ENCODE measurements at regions of chr1 and their contacts with region 1.

Region 1: DNA sequence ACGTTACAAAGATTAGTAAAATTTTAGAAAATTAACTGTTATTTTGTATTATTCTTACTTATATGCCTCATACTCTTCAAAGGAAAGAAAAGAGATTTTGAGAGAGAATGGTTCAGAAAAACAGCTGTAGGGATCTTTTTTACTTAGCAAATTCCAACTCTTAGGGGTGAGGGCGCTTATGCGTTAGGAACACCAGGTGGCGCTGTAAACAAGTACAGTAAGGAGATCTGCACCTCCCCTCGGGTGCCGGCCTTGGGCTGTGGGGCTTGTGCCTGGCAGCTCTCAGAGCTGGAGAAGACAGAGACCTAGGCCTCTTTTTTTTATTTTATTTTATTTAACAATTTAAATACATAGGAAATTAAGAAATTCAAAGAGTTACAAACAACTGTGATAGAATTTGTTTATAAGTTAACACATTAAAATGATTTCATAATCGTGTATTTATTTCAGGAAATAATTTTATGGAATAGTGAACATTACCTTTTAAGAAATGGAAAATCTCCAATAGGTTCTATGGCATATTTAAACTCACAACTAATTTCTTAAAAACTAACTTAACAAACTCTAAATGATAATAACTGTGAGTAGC is 32.6 kb downstream of the UTP25 start:
- DNase-seq: peak; percentile 75 to 94 (median 88)

Region 2: DNA sequence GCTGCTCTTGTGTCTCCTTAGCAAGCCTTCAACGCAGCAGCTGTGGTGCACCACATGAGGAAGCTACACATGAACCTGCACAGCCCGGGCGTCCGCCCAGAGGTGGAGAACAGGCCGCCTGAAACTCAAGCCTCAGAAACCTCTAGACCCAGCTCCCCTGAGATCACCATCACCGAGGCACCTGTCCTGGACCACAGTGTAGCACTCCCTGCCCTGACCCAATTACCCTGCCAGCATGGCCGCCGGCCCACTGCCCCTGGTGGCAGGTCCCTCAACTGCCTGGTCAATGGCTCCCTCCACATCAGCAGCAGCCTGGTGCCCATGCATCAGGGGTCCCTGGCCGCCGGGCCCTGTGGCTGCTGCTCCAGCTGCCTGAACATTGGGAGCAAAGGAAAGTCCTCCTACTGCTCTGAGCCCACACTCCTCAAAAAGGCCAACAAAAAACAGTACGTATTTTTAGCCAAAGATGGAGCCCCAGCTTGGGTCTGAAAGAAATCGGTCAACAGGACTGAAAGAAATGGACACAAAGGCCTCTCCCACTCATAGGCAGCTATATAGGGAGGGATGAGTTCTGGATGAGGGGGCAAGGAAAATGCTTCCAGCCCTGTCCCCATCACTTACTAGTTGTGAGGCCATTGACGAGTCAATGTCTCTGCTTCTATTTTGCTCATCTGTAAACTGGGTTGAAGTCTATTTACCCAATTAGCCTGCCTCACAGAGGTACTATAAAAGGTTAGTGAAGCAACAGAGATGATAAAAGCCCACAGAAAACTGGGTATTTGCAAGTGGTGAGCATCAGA is 248.4 kb before region 1 on chr1:
- intact Hi-C with region 1: no loop called
- DNase-seq: no peak

Region 3: DNA sequence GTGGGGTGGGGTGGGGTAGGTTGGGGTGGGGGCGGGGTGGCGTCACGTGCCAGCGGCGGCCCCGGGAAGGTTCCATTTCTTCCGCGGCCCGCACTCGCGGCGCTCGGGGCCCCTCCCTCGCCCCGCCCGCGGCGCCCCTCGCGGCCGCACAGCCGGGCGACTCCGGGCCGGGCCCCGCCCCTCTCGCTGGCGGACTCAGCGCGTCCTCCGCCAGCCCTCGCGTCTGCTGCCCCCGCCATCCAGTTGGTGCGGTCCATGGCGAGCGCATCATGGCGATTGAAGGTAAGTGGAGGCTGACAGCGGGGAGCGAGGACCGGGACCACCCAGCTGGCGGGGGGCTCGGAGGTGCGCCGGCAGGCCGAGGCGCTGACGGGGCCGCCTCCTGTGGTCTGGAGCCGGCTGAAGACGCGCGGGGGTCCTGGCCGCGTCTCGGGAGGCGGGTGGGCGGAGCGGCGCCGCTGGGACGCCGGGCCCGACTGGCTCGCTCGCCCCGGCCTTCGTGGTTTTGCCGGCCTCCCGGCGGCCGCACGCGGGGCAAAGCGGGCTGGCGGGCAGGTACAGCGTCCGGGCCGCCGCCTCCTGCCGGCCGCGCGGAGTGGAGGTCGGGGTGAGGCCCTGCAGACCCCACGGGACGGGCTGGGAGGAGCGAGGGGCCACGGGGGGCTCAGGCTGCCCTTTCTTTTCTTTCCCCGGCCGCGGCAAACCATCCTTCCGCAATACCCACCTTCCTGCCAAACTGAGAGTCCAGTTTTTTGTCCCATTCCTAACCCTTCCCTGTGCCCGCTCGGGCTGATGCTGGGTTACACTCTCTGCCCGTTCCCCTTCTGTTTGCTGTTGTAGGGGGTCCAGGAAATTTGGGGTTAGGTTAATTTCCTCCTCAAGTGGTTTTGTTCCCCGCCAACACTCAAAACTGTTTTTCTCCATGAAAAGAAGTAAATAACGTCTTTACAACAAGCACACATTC is 77.9 kb after region 1 on chr1 and contains the start of gene SYT14:
- intact Hi-C with region 1: loop called (anchors 5 kb)
- DNase-seq: peak in 38 of 42 donors; percentile 8 to 77 (median 54)

Region 4: DNA sequence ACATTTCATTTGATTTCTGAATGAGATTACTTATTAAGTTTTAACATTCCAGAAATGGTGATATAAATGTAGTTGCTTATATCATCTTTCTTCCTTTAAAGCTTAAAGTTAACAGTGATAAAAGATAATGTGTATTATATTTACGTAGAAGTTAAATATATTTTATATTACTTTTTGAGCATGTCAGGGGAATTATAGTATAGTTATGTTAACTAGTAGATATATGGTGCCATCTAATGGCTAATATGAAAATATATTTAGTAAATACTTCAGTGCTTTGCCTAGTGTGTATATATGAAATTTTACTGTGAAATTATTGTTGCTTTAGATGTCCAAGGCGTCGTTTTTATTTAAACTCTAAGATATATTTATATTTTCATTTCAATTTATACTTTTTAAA is 129.1 kb after region 1 on chr1:
- intact Hi-C with region 1: loop called (anchors 5 kb)
- DNase-seq: no peak